SK-N-SH (cell line): ENCODE measurements at regions of chr10 and their contacts with region 1.

Region 1: DNA sequence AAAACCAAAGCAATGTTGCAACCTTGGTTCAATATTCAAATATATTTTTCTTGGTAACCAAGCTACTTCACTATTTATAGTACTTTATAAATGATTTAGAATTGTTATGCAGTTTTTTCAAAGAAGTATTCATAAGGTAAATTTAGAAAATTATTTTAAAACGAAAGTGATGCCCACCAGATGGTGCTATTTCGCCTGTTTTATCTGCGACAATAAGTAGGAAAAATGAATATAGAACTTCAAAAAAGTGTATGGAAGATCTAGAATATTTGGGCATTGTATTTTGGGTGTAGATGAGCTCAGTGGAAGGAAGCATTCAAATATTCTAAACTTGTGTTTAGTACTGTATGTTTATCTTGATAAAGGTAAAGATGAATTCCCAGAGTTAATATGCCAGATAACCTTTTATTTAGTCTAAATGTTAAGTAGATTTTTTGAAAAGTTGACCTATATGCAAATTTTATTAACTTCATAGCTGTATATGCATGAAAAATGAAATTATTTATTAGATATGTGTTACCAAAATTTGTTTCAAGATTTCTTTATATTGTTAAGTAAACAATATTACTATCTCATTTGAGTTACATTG is 93.2 kb downstream of the ADK start:
- DNase-seq: peak; percentile 11
- H3K4me3 ChIP-seq: no peak overlapping the region
- H3K27ac ChIP-seq: no peak overlapping the region
- H3K4me1 ChIP-seq: peaks cover 3 to 10% of the 10 kb centered on the region in 2 experiments
- H3K27me3 ChIP-seq: no peaks in the 10 kb centered on the region
- CTCF ChIP-seq: peak; percentile 74
- EP300 ChIP-seq: no peak
- RAD21 ChIP-seq: peak; percentile 78

Region 2: DNA sequence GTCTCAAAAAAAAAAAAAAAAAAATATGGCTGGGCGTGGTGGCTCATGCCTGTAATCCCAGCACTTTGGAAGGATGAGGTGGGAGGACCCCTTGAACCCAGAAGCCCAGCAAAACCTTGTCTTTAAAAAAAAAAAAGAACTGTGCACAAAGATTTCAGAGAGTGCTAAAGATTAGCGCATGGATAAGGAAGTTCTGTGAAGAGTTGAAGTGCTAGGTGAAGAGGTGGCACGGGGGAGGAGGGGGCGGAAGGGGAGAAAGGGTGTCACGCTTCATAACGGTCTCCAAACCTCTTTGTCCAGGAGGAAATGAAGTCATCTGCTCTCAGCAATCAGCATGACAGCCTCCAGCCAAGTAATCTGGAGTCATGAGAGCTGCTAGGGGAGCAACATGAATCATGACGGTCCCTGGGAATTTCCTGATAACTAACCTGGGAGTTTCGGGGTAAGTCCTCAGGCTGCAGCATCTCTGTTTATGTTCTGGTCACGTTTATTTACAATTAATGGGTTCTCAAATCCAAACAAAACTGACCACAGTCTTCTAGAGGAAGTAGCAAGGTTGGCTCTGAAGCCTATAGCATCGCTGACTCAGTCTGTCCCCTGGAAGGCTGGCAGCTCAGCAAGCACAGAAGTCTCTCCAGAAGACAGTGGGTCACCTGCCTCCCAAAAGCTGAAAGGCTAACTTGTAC is 335.2 kb before region 1 on chr10:
- CTCF ChIA-PET with region 1: no interaction called
- POLR2A ChIA-PET with region 1: no interaction called
- DNase-seq: no peak
- H3K4me3 ChIP-seq: 0 out of 4 replicates have a peak overlapping the region, but pooled peaks of 1 of the 2 experiments have one; percentile 9
- H3K27ac ChIP-seq: peak overlapping the region in 1 of 2 experiments; percentile 92; a peak in 3 of 4 replicates
- H3K4me1 ChIP-seq: peaks cover 15 to 20% of the 10 kb centered on the region in 2 experiments; a peak in 2 of 4 replicates
- H3K27me3 ChIP-seq: no peaks in the 10 kb centered on the region
- CTCF ChIP-seq: no peak
- EP300 ChIP-seq: peak in 1 of 2 experiments; percentile 82; a peak in 1 of 4 replicates
- RAD21 ChIP-seq: no peak

Region 3: GRCh38 chr10:74227697-74228424 is 16.3 kb before region 1 on chr10:
- CTCF ChIA-PET with region 1: interaction called, 22 read pairs
- POLR2A ChIA-PET with region 1: no interaction called
- DNase-seq: no peak
- H3K4me3 ChIP-seq: no peak overlapping the region
- H3K27ac ChIP-seq: peak overlapping the region in 1 of 2 experiments; percentile 92; a peak in 2 of 4 replicates
- H3K4me1 ChIP-seq: peaks cover 0 to 14% of the 10 kb centered on the region in 2 experiments; a peak in 2 of 4 replicates
- H3K27me3 ChIP-seq: no peaks in the 10 kb centered on the region
- CTCF ChIP-seq: no peak
- EP300 ChIP-seq: no peak
- RAD21 ChIP-seq: no peak

Region 4: GRCh38 chr10:74255888-74256357 is 11.7 kb after region 1 on chr10:
- CTCF ChIA-PET with region 1: interaction called, 30 read pairs
- POLR2A ChIA-PET with region 1: no interaction called
- DNase-seq: no peak
- H3K4me3 ChIP-seq: no peak overlapping the region
- H3K27ac ChIP-seq: no peak overlapping the region
- H3K4me1 ChIP-seq: peaks cover 0 to 4% of the 10 kb centered on the region in 2 experiments; a peak in 1 of 4 replicates
- H3K27me3 ChIP-seq: no peaks in the 10 kb centered on the region
- CTCF ChIP-seq: no peak
- EP300 ChIP-seq: no peak
- RAD21 ChIP-seq: no peak

Region 5: DNA sequence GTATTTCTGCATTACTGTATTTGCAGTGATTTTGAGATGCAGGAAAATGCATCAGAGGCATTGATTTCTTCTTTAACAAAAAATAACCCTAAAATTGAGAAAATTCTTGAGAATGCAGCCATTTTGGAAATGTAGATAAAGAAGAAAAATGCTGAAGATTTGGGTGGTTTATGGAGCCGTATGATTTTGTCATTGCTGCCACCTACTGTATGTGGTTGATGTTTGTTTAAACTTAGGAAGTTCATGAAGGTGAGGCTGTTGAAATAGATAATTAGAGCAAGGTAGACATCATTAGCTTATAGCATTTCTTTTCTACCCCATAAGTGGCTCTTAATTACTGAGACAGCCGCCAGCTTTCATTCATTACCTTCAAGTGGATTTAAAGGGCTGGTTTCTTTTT is 775.2 kb after region 1 on chr10:
- CTCF ChIA-PET with region 1: interaction called, 32 read pairs
- POLR2A ChIA-PET with region 1: no interaction called
- DNase-seq: no peak
- H3K4me3 ChIP-seq: no peak overlapping the region
- H3K27ac ChIP-seq: no peak overlapping the region
- H3K4me1 ChIP-seq: peaks cover 0 to 18% of the 10 kb centered on the region in 2 experiments; a peak in 2 of 4 replicates
- H3K27me3 ChIP-seq: no peaks in the 10 kb centered on the region
- CTCF ChIP-seq: peak; percentile 57
- EP300 ChIP-seq: no peak
- RAD21 ChIP-seq: peak; percentile 86

Region 6: DNA sequence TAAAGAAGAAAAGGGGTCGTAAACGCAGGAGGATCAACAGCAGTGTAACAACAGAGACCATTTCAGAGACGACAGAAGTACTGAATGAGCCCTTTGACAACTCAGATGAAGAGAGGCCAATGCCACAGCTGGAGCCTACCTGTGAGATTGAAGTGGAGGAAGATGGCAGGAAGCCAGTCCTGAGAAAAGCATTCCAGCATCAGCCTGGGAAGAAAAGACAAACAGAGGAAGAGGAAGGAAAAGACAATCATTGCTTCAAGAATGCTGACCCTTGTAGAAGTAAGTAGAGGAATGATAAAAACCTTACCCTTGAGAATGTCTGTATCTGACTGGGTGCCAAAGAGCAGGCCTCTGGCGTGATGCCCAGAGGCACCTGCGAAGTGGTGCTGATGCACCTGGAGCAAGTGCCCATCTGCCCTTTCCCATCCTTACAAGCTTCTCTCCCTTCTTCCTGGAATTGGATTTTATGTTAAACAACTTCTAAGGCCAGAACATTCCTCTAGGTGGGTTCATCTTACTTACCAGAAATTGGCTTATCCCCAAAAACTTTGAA is 780.9 kb after region 1 on chr10:
- CTCF ChIA-PET with region 1: interaction called, 32 read pairs
- POLR2A ChIA-PET with region 1: no interaction called
- DNase-seq: no peak
- H3K4me3 ChIP-seq: no peak overlapping the region
- H3K27ac ChIP-seq: no peak overlapping the region
- H3K4me1 ChIP-seq: peaks cover 0 to 7% of the 10 kb centered on the region in 2 experiments; a peak in 1 of 4 replicates
- H3K27me3 ChIP-seq: no peaks in the 10 kb centered on the region
- CTCF ChIP-seq: no peak
- EP300 ChIP-seq: no peak
- RAD21 ChIP-seq: no peak

Region 7: DNA sequence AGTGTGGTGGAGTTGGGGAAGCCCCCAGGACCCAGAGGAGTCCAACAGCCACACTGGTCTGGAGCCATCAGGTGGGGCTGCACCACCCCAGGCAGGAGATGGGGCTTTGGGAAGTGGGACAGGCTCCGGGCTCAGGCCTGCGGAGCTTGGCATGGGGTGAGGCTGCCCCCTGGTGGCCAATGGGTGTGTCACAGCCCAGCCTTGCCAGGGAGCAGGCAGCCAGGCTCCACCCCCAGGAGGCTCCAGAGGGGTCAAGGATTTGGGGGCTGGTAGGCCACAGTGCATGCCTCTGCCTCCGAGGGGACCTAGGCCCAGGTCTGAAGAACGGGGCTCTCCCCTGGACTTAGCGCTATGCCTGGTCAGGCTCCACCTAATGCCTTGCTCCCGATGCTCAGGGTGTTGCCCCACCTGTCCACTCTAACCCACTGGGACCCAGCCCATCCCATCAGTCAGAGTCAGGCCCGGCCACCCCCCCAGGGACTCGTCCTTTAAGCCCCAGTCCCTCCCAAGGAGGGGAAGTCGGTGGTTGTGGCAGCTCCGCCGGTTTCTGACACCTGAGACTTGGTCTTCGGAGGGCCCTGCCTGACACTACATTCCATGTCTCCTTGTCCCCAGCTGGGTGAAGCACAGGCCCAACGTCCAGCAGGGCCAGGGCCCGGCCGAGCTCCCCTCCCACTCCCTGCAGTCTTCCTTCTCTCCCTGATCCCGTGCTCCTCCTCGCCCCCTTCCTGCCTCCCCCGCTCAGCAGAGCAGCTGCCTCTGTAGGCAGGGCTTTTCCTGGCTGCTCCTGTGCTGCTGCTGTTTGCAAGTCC is 856.0 kb after region 1 on chr10:
- CTCF ChIA-PET with region 1: interaction called, 70 read pairs
- POLR2A ChIA-PET with region 1: no interaction called
- DNase-seq: peak; percentile 93
- H3K4me3 ChIP-seq: no peak overlapping the region; a peak in 1 of 4 replicates
- H3K27ac ChIP-seq: no peak overlapping the region
- H3K4me1 ChIP-seq: peaks cover 0 to 3% of the 10 kb centered on the region in 2 experiments; a peak in 1 of 4 replicates
- H3K27me3 ChIP-seq: no peaks in the 10 kb centered on the region
- CTCF ChIP-seq: peak; percentile 84
- EP300 ChIP-seq: no peak
- RAD21 ChIP-seq: peak; percentile 94

Region 8: GRCh38 chr10:75111367-75111906 is 867.2 kb after region 1 on chr10 and contains the start of gene SAMD8:
- CTCF ChIA-PET with region 1: interaction called, 36 read pairs
- POLR2A ChIA-PET with region 1: no interaction called
- DNase-seq: peak; percentile 99
- H3K4me3 ChIP-seq: peak within 1 kb of the TSS; percentile 75 to 96
- H3K27ac ChIP-seq: peak within 1 kb of the TSS; percentile 91 to 97
- H3K4me1 ChIP-seq: peaks cover 5 to 8% of the 10 kb centered on the region in 2 experiments; a peak in 3 of 4 replicates
- H3K27me3 ChIP-seq: no peaks in the 10 kb centered on the region
- CTCF ChIP-seq: no peak; the same call in none of the 2 replicates
- EP300 ChIP-seq: no peak
- RAD21 ChIP-seq: no peak
- polyA plus RNA-seq, gene SAMD8: 9.7 and 14.3 TPM in 2 replicates